ENCODE measurements at regions of chr11 and their contacts with region 1.

Region 1: DNA sequence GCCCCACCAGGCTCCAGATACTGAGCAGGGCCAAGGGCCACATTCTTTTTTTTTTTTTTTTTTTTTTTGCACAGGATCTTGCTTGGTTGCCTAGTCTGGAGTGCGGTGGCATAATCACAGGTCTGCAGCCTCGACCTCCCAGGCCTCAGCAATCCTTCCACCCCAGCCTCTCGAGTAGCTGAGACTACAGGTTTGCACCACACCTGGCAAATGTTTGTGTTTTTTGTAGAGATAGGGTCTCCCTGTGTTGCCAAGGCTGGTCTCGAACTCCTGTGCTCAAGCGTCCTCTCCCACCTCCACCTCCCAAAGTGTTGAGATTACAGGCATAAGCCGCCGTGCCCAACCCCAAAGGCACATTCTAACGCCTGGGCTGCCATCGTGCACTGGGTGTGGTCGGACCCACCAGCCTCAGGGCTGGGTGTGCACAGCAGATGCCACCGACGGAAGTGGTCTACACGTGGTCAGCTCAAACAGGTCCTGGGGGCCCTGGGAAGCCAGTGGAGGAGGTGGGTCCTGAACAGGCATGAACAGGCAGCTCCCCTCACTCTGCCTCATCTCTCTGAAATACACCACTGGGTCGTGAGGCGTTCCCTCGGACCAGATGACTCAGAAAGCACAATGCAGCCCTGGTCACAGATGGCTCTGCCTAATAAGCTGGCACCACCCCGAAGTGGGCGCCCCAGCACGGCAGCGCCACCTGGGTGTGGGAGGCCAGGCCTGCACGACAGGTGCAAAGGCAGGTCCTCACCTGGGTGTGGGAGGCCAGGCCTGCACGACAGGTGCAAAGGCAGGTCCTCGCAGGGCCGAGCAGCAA is 5.1 kb upstream of the B4GALNT4 start:
- DNase-seq: no peak
- ATAC-seq: no peak
- H3K4me3 ChIP-seq: no peak overlapping the region
- H3K27ac ChIP-seq: no peak overlapping the region
- H3K4me1 ChIP-seq: no peaks in the 10 kb centered on the region
- H3K27me3 ChIP-seq: peaks cover 0 to 53% (median 16%) of the 10 kb centered on the region in 3 donors
- CTCF ChIP-seq: no peak

Region 2: GRCh38 chr11:299951-300735 is 64.0 kb before region 1 on chr11:
- intact Hi-C with region 1: loop called (anchors 2 to 5 kb)
- DNase-seq: peak; percentile 21 to 47
- ATAC-seq: no peak
- H3K4me3 ChIP-seq: no peak overlapping the region
- H3K27ac ChIP-seq: no peak overlapping the region
- H3K4me1 ChIP-seq: no peaks in the 10 kb centered on the region
- H3K27me3 ChIP-seq: peaks cover 0 to 50% (median 4%) of the 10 kb centered on the region in 3 donors
- CTCF ChIP-seq: no peak

Region 3: DNA sequence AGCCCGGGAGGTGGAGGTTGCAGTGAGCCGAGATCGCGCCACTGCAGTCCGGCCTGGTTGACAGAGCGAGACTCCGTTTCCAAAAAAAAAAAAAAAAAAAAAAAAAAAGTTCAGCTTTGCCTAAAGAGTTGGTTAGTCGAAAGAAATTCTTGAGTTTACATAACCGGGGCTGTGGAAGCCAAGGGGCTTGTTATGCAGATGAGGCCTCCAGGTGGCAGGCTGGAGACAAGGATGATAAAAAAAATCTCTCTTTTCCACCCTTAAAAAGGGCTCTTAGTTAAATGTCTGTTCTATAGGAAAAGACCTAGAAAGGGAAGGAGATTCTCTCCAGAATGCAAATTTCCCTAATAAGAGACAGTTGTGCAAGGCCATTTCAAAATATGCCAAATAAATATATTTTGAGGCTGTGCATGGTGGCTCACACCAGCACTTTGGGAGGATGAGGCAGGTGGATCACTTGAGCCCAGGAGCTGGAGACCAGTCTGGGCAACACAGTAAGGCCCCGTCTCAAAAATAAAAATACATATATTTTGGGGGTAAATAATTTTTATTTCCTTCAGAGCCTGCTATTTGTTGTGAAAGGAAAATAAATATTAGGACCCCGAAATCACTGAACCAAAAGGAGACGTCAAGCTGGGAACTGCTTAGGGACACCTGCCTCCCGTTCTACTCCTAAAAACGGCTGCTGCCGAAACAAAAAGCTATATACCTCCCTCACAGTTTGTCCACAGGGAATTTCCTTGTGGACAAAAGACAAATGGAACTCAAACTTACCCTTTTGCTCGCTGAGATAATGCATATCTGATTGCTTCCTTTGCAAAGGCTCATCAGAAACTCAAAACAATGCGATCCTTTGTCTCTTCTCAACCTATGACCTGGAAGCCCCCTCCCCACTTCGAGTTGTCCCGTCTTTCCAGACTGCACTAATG is 59.0 kb before region 1 on chr11:
- intact Hi-C with region 1: loop called in 1 of 2 experiments (anchors 2 kb)
- DNase-seq: peak; percentile 57 to 73
- ATAC-seq: peak in 1 of 4 donors; percentile 38
- H3K4me3 ChIP-seq: no peak overlapping the region
- H3K27ac ChIP-seq: no peak overlapping the region
- H3K4me1 ChIP-seq: no peaks in the 10 kb centered on the region
- H3K27me3 ChIP-seq: peaks cover 0 to 19% (median 4%) of the 10 kb centered on the region in 3 donors
- CTCF ChIP-seq: peak; percentile 49

Region 4: GRCh38 chr11:535519-536454 is 171.6 kb after region 1 on chr11 and contains the start of gene HRAS:
- intact Hi-C with region 1: no loop called
- DNase-seq: peak; percentile 94 to 97
- ATAC-seq: peak; percentile 85 to 93 (median 91)
- H3K4me3 ChIP-seq: peak within 1 kb of the TSS; percentile 81
- H3K27ac ChIP-seq: peak within 1 kb of the TSS; percentile 90
- H3K4me1 ChIP-seq: peaks cover 30% of the 10 kb centered on the region
- H3K27me3 ChIP-seq: peaks cover 0 to 16% (median 0%) of the 10 kb centered on the region in 3 donors
- CTCF ChIP-seq: no peak
- total RNA-seq, gene HRAS: 43.6 to 74.7 (median 53.9) TPM